MCF 10A (cell line): ENCODE measurements at regions of chr2 and their contacts with region 1.

Region 1: DNA sequence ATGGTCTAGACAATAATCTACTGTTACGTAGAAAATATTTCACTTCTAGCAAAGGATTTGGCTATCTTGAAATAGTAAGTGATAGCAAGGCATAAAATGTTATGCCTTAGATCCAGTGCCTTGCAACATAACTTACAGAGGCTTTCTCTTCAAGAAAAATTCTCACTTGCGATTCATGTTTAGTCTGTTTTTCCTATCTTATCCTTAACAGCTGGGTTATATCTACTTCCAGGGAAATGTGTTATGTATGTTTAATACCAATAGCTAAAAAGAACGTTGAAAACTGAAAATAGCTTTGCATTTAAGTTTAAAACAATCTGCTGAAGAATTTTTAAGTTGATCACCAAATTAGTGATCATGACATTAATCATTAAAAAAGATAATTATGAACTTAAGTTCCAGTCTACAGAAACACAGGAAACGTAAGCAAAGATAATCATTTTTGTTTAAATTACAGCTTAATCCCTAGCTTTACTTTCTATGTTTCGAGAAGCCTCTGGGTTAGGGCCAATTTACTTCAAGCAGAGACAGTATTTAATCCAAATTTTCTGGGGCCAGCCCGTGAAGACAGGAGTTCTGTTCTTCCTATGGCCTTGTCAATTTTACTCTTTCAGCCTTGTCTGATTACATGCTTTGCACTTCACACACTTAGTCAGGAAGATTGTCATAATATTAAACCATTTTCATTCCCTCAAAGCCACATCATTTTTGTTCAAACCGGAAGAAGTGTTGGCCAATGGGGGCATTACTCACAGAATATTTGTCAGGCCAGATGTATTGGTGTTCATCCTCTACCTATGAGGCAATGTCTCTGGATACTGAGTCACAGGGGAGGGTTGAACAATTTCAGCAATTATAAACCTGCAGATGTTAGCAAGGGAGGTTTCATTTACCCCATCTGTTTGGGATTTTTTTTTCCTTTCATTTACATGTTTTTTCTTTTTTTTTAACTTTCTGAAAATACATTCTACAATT is 1132.9 kb upstream of the ZEB2 start:
- DNase-seq: peak; percentile 85
- H3K4me3 Mint-ChIP-seq: no peak overlapping the region
- H3K27ac Mint-ChIP-seq: peak overlapping the region; percentile 46
- H3K4me1 Mint-ChIP-seq: peaks cover 6% of the 10 kb centered on the region
- H3K27me3 Mint-ChIP-seq: no peaks in the 10 kb centered on the region
- CTCF ChIP-seq: no peak

Region 2: DNA sequence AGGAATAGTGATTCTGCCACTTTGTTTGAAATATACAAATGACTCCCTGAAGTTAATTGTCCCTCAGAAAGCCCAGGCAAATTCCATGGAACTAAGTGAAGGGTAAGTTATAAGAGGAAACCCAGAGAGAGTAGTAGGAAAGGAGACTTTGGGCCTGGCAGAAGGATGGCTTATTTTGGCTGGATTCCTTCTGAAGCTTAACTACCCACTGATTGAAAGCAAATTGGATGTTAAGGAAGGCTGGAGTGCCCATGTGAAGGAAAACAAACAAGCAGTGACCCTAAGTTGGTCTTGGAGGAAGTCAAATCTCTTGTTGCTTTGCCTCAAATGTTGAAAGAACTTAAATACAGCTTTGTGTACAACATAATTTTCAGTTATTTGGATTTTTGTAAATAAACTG is 26.6 kb before region 1 on chr2:
- CTCF ChIA-PET with region 1: no interaction called
- POLR2A ChIA-PET with region 1: no interaction called
- intact Hi-C with region 1: no loop called
- DNase-seq: no peak
- H3K4me3 Mint-ChIP-seq: no peak overlapping the region
- H3K27ac Mint-ChIP-seq: no peak overlapping the region
- H3K4me1 Mint-ChIP-seq: no peaks in the 10 kb centered on the region
- H3K27me3 Mint-ChIP-seq: no peaks in the 10 kb centered on the region
- CTCF ChIP-seq: no peak

Region 3: DNA sequence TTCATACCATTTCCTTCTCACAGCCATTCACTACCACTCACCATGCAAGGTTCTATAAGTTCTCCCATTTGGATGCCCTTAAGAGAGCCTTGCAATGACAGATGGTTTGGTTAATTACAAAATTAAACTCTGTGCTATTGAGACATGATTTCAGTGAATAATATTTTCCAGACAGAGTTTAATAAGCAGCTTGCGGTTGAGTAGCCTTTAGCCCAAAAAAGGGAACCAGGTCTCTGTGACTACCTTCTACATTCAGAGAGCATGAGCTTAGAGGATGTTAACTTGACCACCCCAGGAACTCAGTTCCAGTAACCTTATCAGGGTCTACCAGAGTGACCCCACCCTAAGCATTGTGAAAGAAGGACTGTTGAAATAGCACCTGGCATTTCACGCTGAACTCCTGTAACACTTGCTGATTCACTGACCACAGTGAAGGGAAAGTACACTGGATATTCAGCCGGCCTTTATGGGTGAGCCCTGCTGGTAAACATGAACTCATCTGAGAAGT is 40.2 kb after region 1 on chr2:
- CTCF ChIA-PET with region 1: no interaction called
- POLR2A ChIA-PET with region 1: interaction called, 3 read pairs
- intact Hi-C with region 1: loop called (anchors 5 kb)
- DNase-seq: peak; percentile 95
- H3K4me3 Mint-ChIP-seq: peak overlapping the region; percentile 14
- H3K27ac Mint-ChIP-seq: peak overlapping the region; percentile 94
- H3K4me1 Mint-ChIP-seq: peaks cover 25% of the 10 kb centered on the region
- H3K27me3 Mint-ChIP-seq: no peaks in the 10 kb centered on the region
- CTCF ChIP-seq: no peak